CD8-positive, alpha-beta T cell (primary cell): ENCODE measurements at regions of chr4 and their contacts with region 1.

Region 1: DNA sequence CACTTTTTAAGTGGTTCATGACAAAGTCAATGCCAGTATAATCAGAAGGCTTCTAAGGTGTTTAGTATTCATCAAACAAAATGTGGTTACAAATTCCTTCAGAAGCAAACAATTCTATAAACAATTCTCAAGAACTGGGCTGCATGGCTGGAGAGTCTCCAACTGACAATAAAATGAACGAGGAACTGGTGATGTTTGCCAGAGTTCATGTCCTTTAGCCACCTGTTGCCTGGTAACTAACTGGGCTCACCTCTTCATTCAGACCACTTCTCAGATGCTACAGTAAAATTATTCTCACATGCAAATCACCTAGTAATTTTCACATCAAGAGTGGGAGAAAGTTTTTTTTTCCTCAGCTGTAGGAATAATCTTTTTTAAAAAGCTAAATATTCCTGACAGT is 53.3 kb downstream of the CAMK2D start:
- DNase-seq: no peak
- ATAC-seq: no peak
- H3K4me3 ChIP-seq: no peak overlapping the region
- H3K4me3 Mint-ChIP-seq: no peak overlapping the region
- H3K27ac ChIP-seq: no peak overlapping the region
- H3K27ac Mint-ChIP-seq: no peak overlapping the region
- H3K4me1 ChIP-seq: no peaks in the 10 kb centered on the region
- H3K4me1 Mint-ChIP-seq: peaks cover 33% of the 10 kb centered on the region
- H3K27me3 ChIP-seq: no peaks in the 10 kb centered on the region
- H3K27me3 Mint-ChIP-seq: no peaks in the 10 kb centered on the region
- CTCF ChIP-seq: no peak

Region 2: DNA sequence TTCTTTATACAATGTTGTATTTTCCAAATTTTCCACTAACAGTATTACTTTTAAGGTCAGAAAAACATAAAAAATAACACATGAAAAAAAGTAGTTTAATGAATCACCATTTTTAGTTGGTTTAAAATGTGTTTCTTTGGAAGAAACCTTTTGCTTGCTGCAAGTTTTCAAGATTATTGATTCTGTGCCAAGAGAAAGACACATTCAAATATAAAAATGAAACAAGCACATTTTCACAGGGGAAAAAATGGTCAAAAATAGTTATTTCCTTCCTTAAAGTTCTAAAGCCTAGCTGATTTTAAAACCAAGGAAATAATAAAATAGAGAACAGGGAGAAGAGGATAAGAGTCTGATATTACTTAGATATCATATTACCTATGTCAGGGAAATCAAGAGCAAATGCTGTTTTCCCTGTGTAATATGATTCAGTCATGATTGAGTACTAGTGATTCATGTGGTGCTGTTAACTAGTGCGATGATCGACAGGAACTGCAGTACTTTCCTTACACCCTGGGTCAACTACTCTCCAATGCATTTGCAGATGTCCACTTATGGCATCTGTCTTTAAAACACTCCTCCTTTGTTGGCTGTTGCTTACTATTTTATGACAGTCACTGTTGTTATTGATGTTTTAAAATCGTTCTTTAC is 50.5 kb before region 1 on chr4:
- CTCF ChIA-PET with region 1: no interaction called
- POLR2A ChIA-PET with region 1: no interaction called
- intact Hi-C with region 1: loop called in 1 of 2 experiments (anchors 5 kb)
- DNase-seq: no peak
- ATAC-seq: no peak
- H3K4me3 ChIP-seq: no peak overlapping the region
- H3K4me3 Mint-ChIP-seq: no peak overlapping the region
- H3K27ac ChIP-seq: no peak overlapping the region
- H3K27ac Mint-ChIP-seq: no peak overlapping the region
- H3K4me1 ChIP-seq: no peaks in the 10 kb centered on the region
- H3K4me1 Mint-ChIP-seq: peaks cover 27% of the 10 kb centered on the region
- H3K27me3 ChIP-seq: no peaks in the 10 kb centered on the region
- H3K27me3 Mint-ChIP-seq: no peaks in the 10 kb centered on the region
- CTCF ChIP-seq: no peak

Region 3: DNA sequence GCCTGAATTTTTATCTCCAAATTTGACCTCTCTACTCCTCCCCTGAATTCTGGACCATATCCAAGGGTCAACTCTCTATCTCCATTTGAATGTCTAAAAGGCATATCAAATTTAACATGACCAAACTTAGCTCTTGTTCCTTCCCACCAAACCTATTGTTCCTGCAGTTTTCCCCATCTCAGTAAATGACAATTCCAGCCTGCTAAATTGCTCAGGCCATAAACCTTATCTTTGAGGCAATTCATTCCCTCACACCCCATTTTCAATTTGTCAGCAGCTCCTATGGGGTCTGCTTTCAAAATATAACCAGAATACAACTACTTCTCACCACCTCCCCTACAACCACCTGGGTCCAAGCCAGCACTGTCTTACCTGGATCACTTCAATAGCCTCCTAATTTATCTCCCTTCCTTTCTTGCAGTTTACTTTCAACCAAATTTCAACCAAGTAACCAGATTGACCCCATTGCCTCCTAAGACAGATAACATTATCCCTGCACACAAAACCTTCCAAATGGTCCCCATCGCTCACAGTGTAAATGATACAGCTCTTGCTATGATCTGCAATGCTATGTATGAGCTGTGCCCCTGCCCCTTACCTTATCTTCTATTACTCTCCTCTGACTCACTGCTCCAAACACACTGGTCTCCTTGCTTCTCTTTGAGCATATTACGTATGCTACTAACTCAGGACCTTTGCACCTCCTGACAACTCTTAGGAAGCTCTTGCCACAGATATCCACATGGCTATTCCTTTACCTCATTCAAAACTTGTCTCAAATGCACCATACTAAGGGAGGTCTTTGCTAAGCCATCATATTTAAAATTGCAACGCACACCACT is 12.7 kb before region 1 on chr4:
- CTCF ChIA-PET with region 1: no interaction called
- POLR2A ChIA-PET with region 1: no interaction called
- intact Hi-C with region 1: loop called in 1 of 2 experiments (anchors 2 kb)
- DNase-seq: no peak
- ATAC-seq: no peak
- H3K4me3 ChIP-seq: no peak overlapping the region
- H3K4me3 Mint-ChIP-seq: no peak overlapping the region
- H3K27ac ChIP-seq: no peak overlapping the region
- H3K27ac Mint-ChIP-seq: no peak overlapping the region
- H3K4me1 ChIP-seq: peaks cover 10% of the 10 kb centered on the region
- H3K4me1 Mint-ChIP-seq: peaks cover 33% of the 10 kb centered on the region
- H3K27me3 ChIP-seq: no peaks in the 10 kb centered on the region
- H3K27me3 Mint-ChIP-seq: no peaks in the 10 kb centered on the region
- CTCF ChIP-seq: no peak

Region 4: DNA sequence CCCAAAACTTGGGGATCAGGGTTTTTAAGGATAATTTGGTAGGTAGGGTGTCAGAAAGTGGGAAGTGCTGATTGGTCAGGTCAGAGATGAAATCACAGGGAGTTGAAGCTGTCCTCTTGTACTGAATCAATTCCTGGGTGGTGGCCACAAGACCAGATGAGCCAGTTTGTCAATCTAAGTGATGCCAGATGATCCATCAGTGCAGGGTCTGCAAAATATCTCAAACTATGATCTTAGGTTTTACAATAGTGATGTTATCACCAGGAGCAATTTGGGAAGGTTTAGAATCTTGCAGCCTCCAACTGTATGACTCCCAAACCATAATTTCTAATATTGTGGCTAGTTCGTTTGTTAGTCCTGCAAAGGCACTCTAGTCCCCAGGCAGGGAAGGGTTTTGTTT is 10.0 kb after region 1 on chr4:
- CTCF ChIA-PET with region 1: no interaction called
- POLR2A ChIA-PET with region 1: interaction called, 3 read pairs
- intact Hi-C with region 1: loop called in 1 of 2 experiments (anchors 1 kb)
- DNase-seq: no peak
- ATAC-seq: no peak
- H3K4me3 ChIP-seq: no peak overlapping the region
- H3K4me3 Mint-ChIP-seq: no peak overlapping the region
- H3K27ac ChIP-seq: no peak overlapping the region
- H3K27ac Mint-ChIP-seq: no peak overlapping the region
- H3K4me1 ChIP-seq: no peaks in the 10 kb centered on the region
- H3K4me1 Mint-ChIP-seq: peaks cover 33% of the 10 kb centered on the region
- H3K27me3 ChIP-seq: no peaks in the 10 kb centered on the region
- H3K27me3 Mint-ChIP-seq: no peaks in the 10 kb centered on the region
- CTCF ChIP-seq: no peak

Region 5: DNA sequence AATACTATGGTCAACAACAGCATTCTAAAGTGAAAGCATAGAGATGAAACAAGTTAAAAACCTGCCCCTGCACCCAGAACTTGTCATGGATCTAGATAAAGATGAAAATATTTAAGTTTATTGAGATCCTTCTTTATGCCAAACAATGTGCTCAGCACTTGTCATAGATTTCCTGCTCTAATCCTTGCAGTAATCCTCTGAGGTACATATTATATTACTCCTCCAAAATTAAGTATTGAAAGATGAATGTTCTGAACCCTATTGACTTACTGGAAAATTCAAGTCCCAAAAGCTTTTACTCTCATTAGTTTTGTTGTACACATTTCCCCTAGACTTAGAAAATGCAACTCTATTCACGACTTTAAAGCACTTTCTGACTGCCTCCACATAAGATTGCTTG is 17.7 kb after region 1 on chr4:
- CTCF ChIA-PET with region 1: no interaction called
- POLR2A ChIA-PET with region 1: interaction called, 3 read pairs
- intact Hi-C with region 1: loop called in 1 of 2 experiments (anchors 2 kb)
- DNase-seq: no peak
- ATAC-seq: no peak
- H3K4me3 ChIP-seq: no peak overlapping the region
- H3K4me3 Mint-ChIP-seq: no peak overlapping the region
- H3K27ac ChIP-seq: no peak overlapping the region
- H3K27ac Mint-ChIP-seq: no peak overlapping the region
- H3K4me1 ChIP-seq: peaks cover 16% of the 10 kb centered on the region
- H3K4me1 Mint-ChIP-seq: peaks cover 63% of the 10 kb centered on the region
- H3K27me3 ChIP-seq: no peaks in the 10 kb centered on the region
- H3K27me3 Mint-ChIP-seq: no peaks in the 10 kb centered on the region
- CTCF ChIP-seq: no peak

Region 6: GRCh38 chr4:113744667-113745240 is 36.5 kb after region 1 on chr4:
- CTCF ChIA-PET with region 1: no interaction called
- POLR2A ChIA-PET with region 1: no interaction called
- intact Hi-C with region 1: loop called in 1 of 2 experiments (anchors 5 kb)
- DNase-seq: no peak
- ATAC-seq: no peak
- H3K4me3 ChIP-seq: no peak overlapping the region
- H3K4me3 Mint-ChIP-seq: no peak overlapping the region
- H3K27ac ChIP-seq: no peak overlapping the region
- H3K27ac Mint-ChIP-seq: no peak overlapping the region
- H3K4me1 ChIP-seq: peaks cover 3% of the 10 kb centered on the region
- H3K4me1 Mint-ChIP-seq: peaks cover 21% of the 10 kb centered on the region
- H3K27me3 ChIP-seq: no peaks in the 10 kb centered on the region
- H3K27me3 Mint-ChIP-seq: no peaks in the 10 kb centered on the region
- CTCF ChIP-seq: no peak